ENCODE measurements at regions of chr20 and their contacts with region 1.

Region 1: DNA sequence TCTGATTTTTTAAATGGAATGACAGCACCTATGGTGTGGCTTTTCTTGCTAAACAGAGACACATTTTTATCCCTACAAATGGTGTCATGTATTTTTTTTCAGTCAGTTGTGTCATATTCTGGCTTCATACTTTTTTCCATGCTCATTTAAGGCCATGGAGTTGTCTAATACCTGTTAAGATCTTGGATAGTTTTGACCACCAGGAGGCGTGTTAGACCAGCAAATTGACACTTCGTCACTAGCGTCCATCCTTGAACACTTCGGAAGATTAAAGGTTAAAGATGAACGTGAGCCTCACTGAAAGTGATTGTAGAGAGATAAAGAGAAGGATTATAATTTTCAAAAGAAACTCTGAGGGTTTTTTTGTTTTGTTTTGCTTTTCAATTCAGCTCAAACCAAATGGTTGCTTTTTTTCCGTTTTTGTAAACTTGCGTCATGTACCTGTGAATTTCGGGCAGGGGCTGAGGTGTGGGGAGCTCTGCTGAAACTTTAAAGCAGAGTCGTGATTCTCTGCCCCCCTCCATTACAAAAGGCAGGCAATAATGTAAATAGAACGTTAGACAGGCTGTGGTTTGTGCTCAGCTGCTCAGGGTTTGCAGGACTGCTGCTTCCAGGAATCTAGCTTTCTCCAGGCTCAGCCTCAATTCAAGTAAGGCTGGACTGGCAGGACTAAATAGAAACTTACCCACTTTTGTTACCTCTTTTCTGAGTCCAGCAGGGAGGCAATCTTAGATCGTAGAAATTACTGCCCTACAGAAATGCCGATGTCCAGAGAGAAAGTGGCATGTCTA is 245.1 kb downstream of the FOXA2 start:
- DNase-seq: peak; percentile 84
- ATAC-seq: peak; percentile 83
- H3K4me3 ChIP-seq: peak overlapping the region in 1 of 2 experiments; percentile 6; a peak in 1 of 4 replicates
- H3K27ac ChIP-seq: peak overlapping the region; percentile 48
- H3K4me1 ChIP-seq: peaks cover 20% of the 10 kb centered on the region
- H3K27me3 ChIP-seq: no peaks in the 10 kb centered on the region
- CTCF ChIP-seq: peak; percentile 76

Region 2: DNA sequence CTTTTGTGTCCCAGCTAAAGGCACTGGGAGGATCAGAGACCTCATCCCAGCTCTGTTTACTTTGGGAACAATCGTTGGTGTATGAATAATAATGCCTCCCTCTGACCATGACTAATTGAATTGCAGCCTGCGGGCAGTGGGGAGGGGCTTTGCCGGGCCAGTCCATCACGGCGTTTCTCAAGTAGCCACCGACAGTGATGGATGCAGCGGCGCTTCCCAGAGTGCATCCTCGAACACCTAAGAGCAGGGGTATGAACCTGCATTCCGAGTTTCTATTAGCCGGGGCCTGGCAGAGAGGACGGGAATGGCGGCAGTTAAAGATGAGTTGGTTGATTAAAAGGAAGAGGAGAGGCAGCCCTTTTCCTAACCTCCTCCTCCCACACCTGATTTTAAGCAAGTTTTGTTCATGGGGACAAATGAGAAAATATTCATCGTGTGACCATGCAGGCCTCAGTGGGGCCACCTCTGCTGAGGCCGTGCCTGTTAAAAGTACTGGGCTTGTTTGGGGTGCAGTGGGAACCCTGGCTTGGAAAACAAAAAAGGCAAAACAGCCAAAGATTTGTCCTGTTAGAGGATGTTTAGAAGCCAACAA is 91.0 kb after region 1 on chr20:
- CTCF ChIA-PET with region 1: no interaction called
- POLR2A ChIA-PET with region 1: no interaction called
- in situ Hi-C with region 1: no loop called
- intact Hi-C with region 1: loop called (anchors 5 kb)
- DNase-seq: peak; percentile 45
- ATAC-seq: peak; percentile 89
- H3K4me3 ChIP-seq: peak overlapping the region in 1 of 2 experiments; percentile 31; a peak in 2 of 4 replicates
- H3K27ac ChIP-seq: peak overlapping the region; percentile 15
- H3K4me1 ChIP-seq: peaks cover 19% of the 10 kb centered on the region
- H3K27me3 ChIP-seq: no peaks in the 10 kb centered on the region
- CTCF ChIP-seq: no peak

Region 3: GRCh38 chr20:22453239-22454080 is 114.2 kb after region 1 on chr20:
- CTCF ChIA-PET with region 1: no interaction called
- POLR2A ChIA-PET with region 1: no interaction called
- in situ Hi-C with region 1: no loop called
- intact Hi-C with region 1: loop called (anchors 5 kb)
- DNase-seq: no peak
- ATAC-seq: no peak
- H3K4me3 ChIP-seq: no peak overlapping the region
- H3K27ac ChIP-seq: no peak overlapping the region
- H3K4me1 ChIP-seq: no peaks in the 10 kb centered on the region
- H3K27me3 ChIP-seq: no peaks in the 10 kb centered on the region
- CTCF ChIP-seq: peak; percentile 88

Region 4: GRCh38 chr20:22490287-22491193 is 151.3 kb after region 1 on chr20:
- CTCF ChIA-PET with region 1: no interaction called
- POLR2A ChIA-PET with region 1: no interaction called
- in situ Hi-C with region 1: no loop called
- intact Hi-C with region 1: loop called (anchors 5 kb)
- DNase-seq: no peak
- ATAC-seq: peak; percentile 89
- H3K4me3 ChIP-seq: no peak overlapping the region
- H3K27ac ChIP-seq: peak overlapping the region; percentile 70
- H3K4me1 ChIP-seq: peaks cover 12% of the 10 kb centered on the region
- H3K27me3 ChIP-seq: no peaks in the 10 kb centered on the region
- CTCF ChIP-seq: peak; percentile 51

Region 5: DNA sequence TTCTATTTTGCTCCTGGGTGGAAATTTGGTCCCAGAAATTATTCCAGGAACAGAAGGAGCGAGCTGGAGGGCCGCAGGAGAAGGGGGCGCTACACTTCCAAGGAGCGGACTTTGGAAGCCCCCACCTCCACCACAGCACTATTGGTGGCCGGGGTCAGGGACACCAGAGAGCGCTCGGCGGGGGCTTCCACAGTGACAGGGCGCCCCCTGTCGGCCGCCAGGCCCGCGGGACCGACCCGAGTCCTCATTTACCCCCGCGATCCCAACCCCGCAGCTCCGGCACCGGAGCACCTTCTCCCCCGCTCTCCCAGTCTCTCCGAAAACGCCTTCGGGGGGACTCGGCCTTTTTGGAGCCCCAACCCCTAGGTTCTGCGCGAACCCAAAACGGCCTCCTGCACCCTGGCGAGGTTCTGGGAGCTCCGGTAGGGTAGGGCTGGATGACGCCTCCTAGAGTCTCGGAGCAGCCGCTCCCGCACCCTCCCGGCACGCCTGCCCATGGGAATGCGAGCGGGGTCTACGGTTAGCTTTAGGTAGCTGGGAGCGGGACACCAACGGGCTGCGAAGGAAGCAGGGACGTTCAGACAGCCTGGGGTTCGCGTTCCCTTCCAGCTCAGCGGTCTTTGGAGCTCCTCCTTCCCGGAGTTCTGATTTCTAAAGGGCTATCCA is 247.5 kb after region 1 on chr20:
- CTCF ChIA-PET with region 1: interaction called, 17 read pairs
- POLR2A ChIA-PET with region 1: no interaction called
- in situ Hi-C with region 1: no loop called
- intact Hi-C with region 1: loop called (anchors 2 kb)
- DNase-seq: no peak
- ATAC-seq: peak; percentile 45
- H3K4me3 ChIP-seq: peak overlapping the region; percentile 46 to 70
- H3K27ac ChIP-seq: peak overlapping the region; percentile 69
- H3K4me1 ChIP-seq: peaks cover 3% of the 10 kb centered on the region
- H3K27me3 ChIP-seq: peaks cover 2% of the 10 kb centered on the region; the same call in 1 of the 2 replicates
- CTCF ChIP-seq: peak; percentile 97

Region 6: DNA sequence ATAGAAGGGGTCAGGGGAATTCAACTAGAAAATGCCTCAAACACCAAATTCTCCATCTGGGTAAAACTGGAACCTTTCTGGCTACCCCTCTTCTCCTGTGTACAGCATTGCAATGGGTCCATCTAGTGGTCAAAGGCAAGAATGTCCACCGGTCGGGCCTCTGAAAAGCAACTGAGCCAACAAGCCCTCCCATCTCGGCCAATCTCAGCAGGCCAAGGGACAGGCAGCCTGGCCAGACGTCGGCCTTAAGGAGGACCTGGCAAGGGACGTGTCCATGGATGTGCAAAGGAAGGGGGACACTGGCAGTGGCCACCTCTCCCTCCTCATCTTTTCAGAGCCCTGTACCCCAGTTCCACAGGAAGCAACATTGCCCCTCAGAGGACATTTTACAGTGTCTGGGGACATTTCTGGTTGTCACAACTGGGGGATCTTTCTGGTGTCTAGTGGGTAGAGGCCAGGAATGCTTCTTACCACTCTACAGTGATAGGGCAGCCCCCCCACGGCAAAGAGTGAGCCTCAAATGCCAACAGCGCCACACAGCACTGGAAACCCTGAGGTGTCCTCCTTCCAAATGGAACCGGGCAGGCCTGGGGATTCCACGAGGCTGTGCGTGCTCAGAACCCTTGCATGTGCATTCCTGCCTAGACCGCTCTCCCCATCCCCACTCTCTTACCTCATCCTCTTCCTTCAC is 344.9 kb after region 1 on chr20:
- CTCF ChIA-PET with region 1: interaction called, 10 read pairs
- POLR2A ChIA-PET with region 1: no interaction called
- in situ Hi-C with region 1: no loop called
- intact Hi-C with region 1: loop called (anchors 1 kb)
- DNase-seq: peak; percentile 56
- ATAC-seq: peak; percentile 94
- H3K4me3 ChIP-seq: no peak overlapping the region
- H3K27ac ChIP-seq: no peak overlapping the region
- H3K4me1 ChIP-seq: peaks cover 4% of the 10 kb centered on the region
- H3K27me3 ChIP-seq: no peaks in the 10 kb centered on the region
- CTCF ChIP-seq: peak; percentile 89